ENCODE measurements at regions of chr12 and their contacts with region 1.

Region 1: DNA sequence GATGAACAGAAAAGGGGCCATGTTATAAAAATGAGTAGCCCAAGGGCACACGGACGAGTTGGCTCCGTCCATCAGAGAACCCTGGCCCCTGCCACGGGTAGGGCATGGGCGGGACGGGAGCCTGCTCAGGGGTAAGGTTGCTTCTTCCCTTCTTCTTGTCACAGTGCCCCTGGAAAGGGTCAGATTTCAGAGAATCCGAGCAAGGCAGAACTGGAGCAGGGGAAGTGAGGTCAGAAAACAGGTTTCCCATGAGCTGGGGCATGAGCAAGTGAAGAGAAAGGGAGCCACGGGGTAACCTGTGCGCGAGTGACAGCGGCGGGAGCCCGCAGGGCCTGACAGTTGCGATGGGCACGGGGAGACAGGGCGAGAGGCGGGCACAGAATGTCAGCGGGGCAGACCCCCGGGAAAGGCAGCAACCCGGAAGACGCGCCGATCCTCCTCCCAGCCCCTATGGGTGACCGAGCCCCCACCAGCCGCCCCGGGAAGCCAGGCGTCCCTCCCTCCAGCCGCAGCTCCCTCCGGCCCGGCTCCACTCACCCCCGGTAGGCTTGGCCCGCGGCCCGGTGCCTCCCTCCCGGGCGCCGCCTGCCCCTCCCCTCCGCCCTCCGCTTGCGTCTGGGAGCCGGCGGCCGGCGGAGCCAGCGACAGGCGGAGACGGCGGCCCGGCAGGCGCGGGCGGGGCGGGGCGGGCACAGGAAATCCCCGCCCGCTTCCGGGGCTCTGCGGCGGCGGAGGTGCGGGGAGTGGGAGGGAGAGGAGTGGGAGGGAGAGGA is at the start of gene ZNF641:
- DNase-seq: peak; percentile 45 to 87 (median 70)
- H3K4me3 ChIP-seq: peak within 1 kb of the TSS; percentile 47 to 96 (median 85)
- H3K27ac ChIP-seq: peak within 1 kb of the TSS; percentile 83 to 99 (median 97)
- H3K27me3 ChIP-seq: no peaks in the 10 kb centered on the region
- CTCF ChIP-seq: peak in 5 of 56 donors; percentile 12 to 40 (median 18)
- total RNA-seq, gene ZNF641: 14.7 to 40.6 (median 27.1) TPM

Region 2: DNA sequence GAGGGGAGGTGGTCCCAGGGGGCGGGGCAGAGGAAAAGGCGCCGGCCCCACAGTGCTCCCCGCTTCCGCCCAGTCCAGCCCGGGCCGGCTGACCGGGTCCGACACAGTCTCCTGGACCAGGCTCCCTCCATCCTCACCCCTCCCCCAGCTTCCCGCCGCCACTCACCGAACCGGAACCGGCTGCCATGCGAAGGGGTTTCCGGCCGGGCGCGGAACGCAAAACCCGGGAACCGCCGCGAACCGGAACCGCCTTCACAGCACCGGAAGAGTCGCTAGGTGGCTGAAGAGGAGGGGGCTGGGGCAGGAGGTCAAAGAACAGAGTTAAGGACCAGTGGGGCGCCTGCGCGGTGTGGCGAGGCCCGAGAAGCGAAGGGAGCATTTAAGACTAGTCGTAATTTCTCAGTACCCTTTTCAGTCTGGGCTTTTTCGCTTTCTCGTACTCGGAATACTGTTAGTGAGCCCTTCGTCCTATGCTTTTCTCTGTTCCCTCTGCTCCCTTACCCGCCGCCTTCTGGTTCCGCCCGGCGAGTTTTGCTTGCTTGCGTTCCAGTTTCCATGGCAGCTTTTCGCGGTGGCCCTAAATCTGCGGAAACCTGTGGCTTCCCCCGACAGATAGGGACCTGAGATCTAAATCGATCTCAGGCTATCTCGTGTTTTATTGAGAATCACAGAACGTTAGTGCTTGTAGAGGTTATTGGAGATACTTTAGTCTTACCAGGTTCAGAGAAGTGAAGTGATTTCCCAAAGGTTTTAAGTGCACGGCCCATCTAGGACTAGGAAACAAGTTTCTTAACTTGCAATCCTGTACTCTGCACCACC is 244.4 kb before region 1 on chr12 and contains the start of gene SENP1:
- intact Hi-C with region 1: loop called in 1 of 2 experiments (anchors 5 kb)
- DNase-seq: peak; percentile 79 to 93 (median 90)
- H3K4me3 ChIP-seq: peak within 1 kb of the TSS; percentile 56 to 99 (median 92)
- H3K27ac ChIP-seq: peak within 1 kb of the TSS; percentile 83 to 99 (median 95)
- H3K27me3 ChIP-seq: peaks cover 0 to 13% (median 0%) of the 10 kb centered on the region in 45 donors
- CTCF ChIP-seq: peak in 53 of 56 donors; percentile 16 to 74 (median 47)
- total RNA-seq, gene SENP1: 8.3 to 29.6 (median 18.5) TPM